ENCODE measurements at regions of chr2 and their contacts with region 1.

Region 1: GRCh38 chr2:109128048-109128465 is 948 bp upstream of the SH3RF3 start:
- DNase-seq: no peak
- ATAC-seq: peak; percentile 69
- H3K4me3 ChIP-seq: peak overlapping the region; percentile 67
- H3K27ac ChIP-seq: no peak overlapping the region
- H3K4me1 ChIP-seq: no peaks in the 10 kb centered on the region; the same call in 1 of the 2 replicates
- H3K27me3 ChIP-seq: peaks cover 0 to 2% of the 10 kb centered on the region in 2 experiments; a peak in 3 of 4 replicates
- CTCF ChIP-seq: peak; percentile 69 to 92 (median 76); a peak in 5 of 6 replicates
- EP300 ChIP-seq: no peak; a peak in 1 of 4 replicates
- POLR2A ChIP-seq: no peak
- RAD21 ChIP-seq: peak; percentile 82

Region 2: DNA sequence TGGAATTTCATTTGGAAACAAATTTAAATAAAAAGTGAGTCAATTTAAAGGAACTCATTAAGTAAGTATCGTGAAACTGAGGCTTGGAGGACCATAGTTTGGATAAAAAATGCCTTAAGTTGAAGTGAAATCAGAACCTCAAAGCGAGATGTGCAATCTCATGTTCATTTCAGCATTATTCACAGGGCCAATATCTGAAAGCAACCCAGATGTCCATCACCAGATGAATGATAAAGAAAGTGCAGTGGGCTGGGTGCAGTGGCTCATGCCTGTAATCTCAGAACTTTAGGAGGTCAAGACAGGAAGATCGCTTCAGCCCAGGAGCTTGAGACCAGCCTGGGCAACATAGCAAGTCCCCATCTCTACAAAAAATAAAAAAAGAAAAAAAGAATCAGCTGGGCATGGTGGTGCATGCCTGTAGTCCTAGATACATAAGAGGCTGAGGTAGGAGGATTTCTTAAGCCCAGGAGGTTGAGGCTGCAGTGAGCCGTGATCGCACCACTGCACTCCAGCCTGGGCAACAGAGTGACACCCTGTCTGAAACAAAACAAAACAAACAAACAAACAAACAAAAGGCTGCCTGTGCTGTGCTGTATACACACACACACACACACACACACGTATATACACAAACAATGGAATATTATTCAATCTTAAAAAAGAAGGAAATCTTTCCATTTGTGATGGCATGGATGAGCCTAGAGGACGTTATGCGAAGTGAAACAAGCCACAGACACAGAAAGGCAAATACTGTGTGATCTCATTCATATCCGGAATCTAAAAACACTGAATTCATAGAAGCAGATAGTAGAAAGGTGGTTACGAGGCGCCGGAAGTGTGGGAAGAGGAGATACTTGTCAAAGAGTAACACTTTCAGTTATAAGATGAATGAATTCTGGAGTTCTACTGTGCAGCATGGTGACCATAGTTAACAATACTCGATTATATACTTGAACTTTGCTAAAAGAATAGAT is 15.4 kb after region 1 on chr2:
- CTCF ChIA-PET with region 1: interaction called, 15 read pairs
- POLR2A ChIA-PET with region 1: no interaction called
- RAD21 ChIA-PET with region 1: interaction called, 9 read pairs
- SMC1A ChIA-PET with region 1: interaction called, 18 read pairs
- in situ Hi-C with region 1: no loop called
- intact Hi-C with region 1: no loop called
- DNase-seq: peak; percentile 66
- ATAC-seq: peak; percentile 92
- H3K4me3 ChIP-seq: peak overlapping the region; percentile 38; the same call in 1 of the 2 replicates
- H3K27ac ChIP-seq: no peak overlapping the region; the same call in 1 of the 2 replicates
- H3K4me1 ChIP-seq: peaks cover 27% of the 10 kb centered on the region
- H3K27me3 ChIP-seq: peaks cover 0 to 3% of the 10 kb centered on the region in 2 experiments; a peak in 2 of 4 replicates
- CTCF ChIP-seq: no peak
- EP300 ChIP-seq: peak; percentile 56 to 80; a peak in 3 of 4 replicates
- POLR2A ChIP-seq: no peak
- RAD21 ChIP-seq: 0 out of 2 replicates have a peak, but pooled peaks have one; percentile 5

Region 3: GRCh38 chr2:109213646-109214417 is 85.8 kb after region 1 on chr2:
- CTCF ChIA-PET with region 1: interaction called, 10 read pairs
- POLR2A ChIA-PET with region 1: interaction called, 7 read pairs
- RAD21 ChIA-PET with region 1: interaction called, 23 read pairs
- SMC1A ChIA-PET with region 1: interaction called, 48 read pairs
- in situ Hi-C with region 1: no loop called
- intact Hi-C with region 1: loop called (anchors 2 kb)
- DNase-seq: peak; percentile 82
- ATAC-seq: peak; percentile 77
- H3K4me3 ChIP-seq: no peak overlapping the region
- H3K27ac ChIP-seq: no peak overlapping the region
- H3K4me1 ChIP-seq: peaks cover 39% of the 10 kb centered on the region
- H3K27me3 ChIP-seq: no peaks in the 10 kb centered on the region; a peak in 1 of 4 replicates
- CTCF ChIP-seq: no peak
- EP300 ChIP-seq: peak; percentile 77 to 92; a peak in 2 of 4 replicates
- POLR2A ChIP-seq: no peak
- RAD21 ChIP-seq: no peak

Region 4: GRCh38 chr2:109254174-109254904 is 126.3 kb after region 1 on chr2:
- CTCF ChIA-PET with region 1: no interaction called
- POLR2A ChIA-PET with region 1: no interaction called
- RAD21 ChIA-PET with region 1: no interaction called
- SMC1A ChIA-PET with region 1: interaction called, 4 read pairs
- in situ Hi-C with region 1: no loop called
- intact Hi-C with region 1: loop called (anchors 5 kb)
- DNase-seq: peak; percentile 94
- ATAC-seq: peak; percentile 84
- H3K4me3 ChIP-seq: no peak overlapping the region
- H3K27ac ChIP-seq: peak overlapping the region; percentile 62
- H3K4me1 ChIP-seq: peaks cover 29% of the 10 kb centered on the region
- H3K27me3 ChIP-seq: no peaks in the 10 kb centered on the region
- CTCF ChIP-seq: no peak
- EP300 ChIP-seq: peak; percentile 23 to 27; a peak in 1 of 4 replicates
- POLR2A ChIP-seq: no peak
- RAD21 ChIP-seq: no peak

Region 5: GRCh38 chr2:109396202-109397180 is 268.4 kb after region 1 on chr2:
- CTCF ChIA-PET with region 1: no interaction called
- POLR2A ChIA-PET with region 1: no interaction called
- RAD21 ChIA-PET with region 1: interaction called, 3 read pairs
- SMC1A ChIA-PET with region 1: interaction called, 3 read pairs
- in situ Hi-C with region 1: no loop called
- intact Hi-C with region 1: loop called (anchors 5 kb)
- DNase-seq: no peak
- ATAC-seq: peak; percentile 87
- H3K4me3 ChIP-seq: no peak overlapping the region
- H3K27ac ChIP-seq: no peak overlapping the region
- H3K4me1 ChIP-seq: no peaks in the 10 kb centered on the region; the same call in 1 of the 2 replicates
- H3K27me3 ChIP-seq: no peaks in the 10 kb centered on the region
- CTCF ChIP-seq: no peak
- EP300 ChIP-seq: no peak; a peak in 1 of 4 replicates
- POLR2A ChIP-seq: no peak
- RAD21 ChIP-seq: no peak

Measured in GM12878 (cell line).